Panc1 (cell line): ENCODE measurements at regions of chr10 and their contacts with region 1.

Region 1: DNA sequence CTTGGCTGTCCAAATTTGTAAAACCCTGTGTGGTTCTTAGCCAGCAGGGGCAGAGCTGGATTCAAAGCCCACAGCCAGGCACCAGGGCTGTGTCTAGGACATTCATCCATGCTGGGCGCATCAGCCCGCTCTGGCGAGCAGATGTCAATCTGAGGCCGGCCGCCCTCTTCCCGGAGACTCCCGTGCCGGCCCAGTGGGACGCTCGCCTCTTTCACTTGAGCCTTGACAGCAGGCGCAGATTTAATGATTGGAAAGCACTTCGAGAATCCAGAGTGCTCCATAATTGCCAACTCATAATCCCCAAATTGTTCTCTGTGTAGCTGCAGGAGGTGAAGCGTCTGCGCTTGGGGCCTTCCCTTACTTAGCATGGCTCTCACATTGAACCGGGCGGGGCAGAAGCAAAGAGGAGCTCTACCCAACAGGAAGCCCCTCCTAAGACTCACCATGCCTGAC is 36.7 kb downstream of the SLIT1 start:
- DNase-seq: no peak
- ATAC-seq: peak; percentile 39; the same call in 1 of the 2 replicates
- H3K4me3 ChIP-seq: no peak overlapping the region
- H3K27ac ChIP-seq: no peak overlapping the region
- H3K4me1 ChIP-seq: no peaks in the 10 kb centered on the region
- H3K27me3 ChIP-seq: no peaks in the 10 kb centered on the region
- CTCF ChIP-seq: no peak

Region 2: GRCh38 chr10:97170326-97170725 is 21.2 kb after region 1 on chr10:
- CTCF ChIA-PET with region 1: no interaction called
- POLR2A ChIA-PET with region 1: no interaction called
- in situ Hi-C with region 1: no loop called
- intact Hi-C with region 1: loop called (anchors 1 kb)
- DNase-seq: no peak
- ATAC-seq: peak; percentile 58
- H3K4me3 ChIP-seq: no peak overlapping the region
- H3K27ac ChIP-seq: no peak overlapping the region
- H3K4me1 ChIP-seq: no peaks in the 10 kb centered on the region
- H3K27me3 ChIP-seq: no peaks in the 10 kb centered on the region; the same call in 1 of the 2 replicates
- CTCF ChIP-seq: no peak

Region 3: DNA sequence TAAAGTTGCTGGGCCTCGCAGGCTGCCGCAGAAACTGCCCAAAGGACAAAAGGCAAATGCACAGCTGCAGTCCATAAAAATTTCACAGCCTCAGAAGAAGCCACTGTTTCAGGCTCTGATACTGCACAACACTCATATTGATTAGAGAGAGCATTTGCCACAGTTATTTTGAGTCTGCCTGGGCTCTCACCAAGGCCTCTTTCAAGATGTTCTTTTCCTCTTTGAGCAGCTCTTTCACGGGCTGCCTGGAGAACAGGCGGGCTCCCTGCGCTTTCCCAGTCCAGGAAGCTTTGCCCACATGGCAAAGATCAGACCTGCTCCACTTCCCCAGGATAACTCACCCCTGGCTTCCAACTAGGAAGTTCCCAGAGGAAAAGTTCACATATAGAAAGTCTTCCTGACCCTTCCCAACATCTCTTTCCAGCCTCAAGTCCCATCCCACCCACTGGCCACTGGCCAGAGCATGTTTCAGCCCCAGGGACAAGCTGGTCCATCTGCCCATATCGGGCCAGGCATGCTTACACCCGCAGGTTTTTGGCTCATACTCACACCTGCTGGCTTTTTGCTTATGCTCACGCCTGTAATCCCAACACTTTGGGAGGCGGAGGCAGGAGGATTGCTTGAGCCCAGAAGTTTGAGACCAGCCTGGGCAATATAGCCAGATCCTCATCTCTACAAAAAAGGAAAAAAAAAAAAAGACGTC is 33.3 kb after region 1 on chr10:
- CTCF ChIA-PET with region 1: no interaction called
- POLR2A ChIA-PET with region 1: no interaction called
- in situ Hi-C with region 1: no loop called
- intact Hi-C with region 1: no loop called
- DNase-seq: no peak
- ATAC-seq: no peak
- H3K4me3 ChIP-seq: no peak overlapping the region
- H3K27ac ChIP-seq: no peak overlapping the region
- H3K4me1 ChIP-seq: peaks cover 4% of the 10 kb centered on the region
- H3K27me3 ChIP-seq: peaks cover 12% of the 10 kb centered on the region
- CTCF ChIP-seq: no peak

Region 4: GRCh38 chr10:97454330-97455036 is 305.4 kb after region 1 on chr10:
- CTCF ChIA-PET with region 1: no interaction called
- POLR2A ChIA-PET with region 1: no interaction called
- in situ Hi-C with region 1: no loop called
- intact Hi-C with region 1: no loop called
- DNase-seq: no peak
- ATAC-seq: peak; percentile 9; the same call in 1 of the 2 replicates
- H3K4me3 ChIP-seq: no peak overlapping the region
- H3K27ac ChIP-seq: no peak overlapping the region
- H3K4me1 ChIP-seq: no peaks in the 10 kb centered on the region
- H3K27me3 ChIP-seq: no peaks in the 10 kb centered on the region
- CTCF ChIP-seq: no peak